Left cardiac atrium (tissue), 4 donors: ENCODE measurements at regions of chr5 and their contacts with region 1.

Region 1: GRCh38 chr5:18314192-18314778 is 680.0 kb downstream of the TAF11L14 start:
- DNase-seq: no peak
- ATAC-seq: no peak

Region 2: DNA sequence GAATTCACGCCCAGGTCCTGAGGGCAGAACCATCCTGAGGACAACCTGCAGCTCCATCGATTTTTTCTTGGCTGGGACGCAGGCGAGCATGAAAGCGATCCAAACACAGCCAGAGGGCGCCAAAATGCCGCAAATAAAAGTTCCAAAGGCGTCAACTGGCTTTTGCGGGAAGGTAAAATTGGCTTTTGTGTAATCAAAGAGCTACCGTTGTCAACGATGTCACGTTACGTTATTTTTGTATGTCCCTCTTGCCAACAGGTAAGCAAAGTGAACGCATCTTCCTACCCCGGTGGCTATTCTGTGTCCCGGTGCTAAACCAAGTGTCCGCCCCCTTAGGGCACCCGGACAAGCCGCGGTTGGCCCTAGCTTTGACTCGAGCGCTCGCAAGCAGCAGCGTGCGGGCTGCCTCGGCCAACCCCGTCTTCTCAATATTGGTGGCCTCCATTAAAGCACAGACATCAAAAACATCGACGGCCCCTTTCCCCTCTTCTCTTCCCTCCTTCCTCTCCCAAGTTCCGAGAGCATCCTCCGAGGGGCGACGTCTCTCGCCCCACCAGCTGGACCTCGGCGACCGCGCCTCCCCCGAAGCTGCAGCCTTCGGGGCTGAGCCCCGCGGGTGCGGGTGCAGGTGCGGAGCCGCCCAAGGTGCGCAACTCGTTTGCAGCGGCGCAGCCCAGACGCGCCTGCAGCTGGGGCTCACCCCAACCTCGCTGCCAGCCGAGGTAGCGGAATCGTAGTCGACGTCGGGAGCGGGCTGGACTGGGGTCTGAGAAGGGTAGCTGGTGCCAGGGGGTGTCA is 1097.9 kb before region 1 on chr5:
- intact Hi-C with region 1: loop called (anchors 2 to 10 kb)
- DNase-seq: peak; percentile 77
- ATAC-seq: peak; percentile 51 to 65

Region 3: GRCh38 chr5:17228821-17229291 is 1085.4 kb before region 1 on chr5:
- intact Hi-C with region 1: loop called in 1 of 2 experiments (anchors 10 kb)
- DNase-seq: no peak
- ATAC-seq: peak in 1 of 2 donors; percentile 65